ENCODE measurements at regions of chr3 and their contacts with region 1.

Region 1: DNA sequence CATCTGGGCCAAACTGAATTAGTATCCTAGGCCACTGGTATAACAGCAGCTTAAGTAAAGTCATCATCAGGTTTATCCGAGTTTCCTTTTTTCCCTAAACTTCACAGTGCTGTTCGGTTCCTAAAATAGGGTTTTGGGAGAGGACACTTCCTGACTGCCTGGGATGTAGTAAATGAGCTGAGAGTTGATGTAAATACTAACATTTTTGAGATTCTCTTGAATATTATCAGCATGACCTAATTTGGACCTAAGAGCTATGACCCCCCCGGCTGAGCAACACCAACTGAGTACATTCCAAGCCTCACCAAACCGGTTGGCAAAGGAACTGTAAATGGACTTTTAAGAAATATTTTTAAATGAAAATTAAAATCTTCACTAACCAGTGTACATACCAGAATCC is 78.8 kb downstream of the IL5RA start:
- DNase-seq: peak; percentile 38
- ATAC-seq: peak; percentile 87
- H3K4me3 ChIP-seq: no peak overlapping the region
- H3K27ac ChIP-seq: peak overlapping the region; percentile 79; the same call in 1 of the 2 replicates
- H3K4me1 ChIP-seq: peaks cover 4% of the 10 kb centered on the region; the same call in 1 of the 2 replicates
- H3K27me3 ChIP-seq: no peaks in the 10 kb centered on the region
- CTCF ChIP-seq: no peak
- POLR2A ChIP-seq: no peak
- RAD21 ChIP-seq: no peak

Region 2: DNA sequence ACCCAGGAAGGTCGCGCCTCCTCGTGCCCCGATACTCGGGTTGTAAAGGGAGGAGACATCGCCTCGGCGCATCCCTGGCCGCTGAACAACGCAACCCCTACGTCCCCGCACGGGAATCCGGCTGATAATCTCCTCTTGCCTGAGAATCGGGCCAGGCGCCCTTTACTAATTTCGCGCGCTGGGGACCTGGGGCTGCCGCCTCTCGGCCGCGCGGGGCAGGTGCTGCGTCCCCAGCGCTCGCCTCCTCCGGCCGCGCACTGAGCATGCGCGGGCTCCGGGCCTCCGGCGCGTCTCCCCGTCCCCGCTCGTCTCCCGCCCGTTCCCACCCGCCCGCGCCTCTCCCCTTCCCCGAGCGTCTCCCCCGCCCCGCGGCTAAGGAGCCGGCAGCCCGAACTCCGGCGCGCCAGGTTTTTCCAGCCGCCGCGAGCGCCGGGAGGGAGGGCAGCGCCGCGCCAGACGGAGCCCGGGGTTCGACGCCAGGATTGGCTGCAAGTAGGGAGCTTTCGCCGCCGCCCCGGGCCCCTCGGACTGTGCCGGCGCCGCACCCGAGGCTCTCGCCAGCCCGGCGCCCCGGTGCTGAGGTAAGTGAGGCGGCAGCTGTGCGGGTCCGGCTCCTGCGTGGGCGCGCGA is 932.8 kb before region 1 on chr3 and contains the start of gene CNTN4:
- CTCF ChIA-PET with region 1: no interaction called
- POLR2A ChIA-PET with region 1: no interaction called
- dilution Hi-C with region 1: no loop called
- in situ Hi-C with region 1: no loop called
- intact Hi-C with region 1: no loop called
- DNase-seq: no peak
- ATAC-seq: no peak
- H3K4me3 ChIP-seq: no peak within 1 kb of the TSS
- H3K27ac ChIP-seq: no peak within 1 kb of the TSS
- H3K4me1 ChIP-seq: no peaks in the 10 kb centered on the region
- H3K27me3 ChIP-seq: no peaks in the 10 kb centered on the region; the same call in 1 of the 2 replicates
- CTCF ChIP-seq: no peak
- POLR2A ChIP-seq: no peak
- RAD21 ChIP-seq: no peak
- total RNA-seq, gene CNTN4: under 0.01 TPM in 2 replicates

Region 3: DNA sequence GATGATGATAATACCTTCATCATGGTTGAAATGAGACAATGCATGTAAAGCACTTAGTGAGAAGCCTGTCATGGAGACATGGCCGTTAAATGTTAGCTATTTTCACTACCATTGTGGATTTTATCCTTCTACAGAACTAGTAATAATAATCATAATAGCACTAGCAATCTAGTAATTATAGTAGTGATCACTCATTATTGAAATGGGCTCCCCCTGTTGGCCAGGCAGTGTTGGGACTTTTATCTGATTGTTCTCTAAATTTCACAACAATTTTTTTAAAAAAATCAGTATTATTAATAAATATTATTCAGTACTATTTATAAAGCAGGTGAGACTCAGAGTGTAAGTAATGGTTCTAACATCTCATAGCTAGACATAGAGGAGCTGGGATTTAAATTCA is 317.4 kb before region 1 on chr3:
- CTCF ChIA-PET with region 1: no interaction called
- POLR2A ChIA-PET with region 1: no interaction called
- dilution Hi-C with region 1: no loop called
- in situ Hi-C with region 1: no loop called
- intact Hi-C with region 1: no loop called
- DNase-seq: no peak
- ATAC-seq: no peak
- H3K4me3 ChIP-seq: no peak overlapping the region
- H3K27ac ChIP-seq: no peak overlapping the region
- H3K4me1 ChIP-seq: no peaks in the 10 kb centered on the region
- H3K27me3 ChIP-seq: no peaks in the 10 kb centered on the region
- CTCF ChIP-seq: peak; percentile 38
- POLR2A ChIP-seq: no peak
- RAD21 ChIP-seq: peak; percentile 20; the same call in 1 of the 2 replicates

Region 4: DNA sequence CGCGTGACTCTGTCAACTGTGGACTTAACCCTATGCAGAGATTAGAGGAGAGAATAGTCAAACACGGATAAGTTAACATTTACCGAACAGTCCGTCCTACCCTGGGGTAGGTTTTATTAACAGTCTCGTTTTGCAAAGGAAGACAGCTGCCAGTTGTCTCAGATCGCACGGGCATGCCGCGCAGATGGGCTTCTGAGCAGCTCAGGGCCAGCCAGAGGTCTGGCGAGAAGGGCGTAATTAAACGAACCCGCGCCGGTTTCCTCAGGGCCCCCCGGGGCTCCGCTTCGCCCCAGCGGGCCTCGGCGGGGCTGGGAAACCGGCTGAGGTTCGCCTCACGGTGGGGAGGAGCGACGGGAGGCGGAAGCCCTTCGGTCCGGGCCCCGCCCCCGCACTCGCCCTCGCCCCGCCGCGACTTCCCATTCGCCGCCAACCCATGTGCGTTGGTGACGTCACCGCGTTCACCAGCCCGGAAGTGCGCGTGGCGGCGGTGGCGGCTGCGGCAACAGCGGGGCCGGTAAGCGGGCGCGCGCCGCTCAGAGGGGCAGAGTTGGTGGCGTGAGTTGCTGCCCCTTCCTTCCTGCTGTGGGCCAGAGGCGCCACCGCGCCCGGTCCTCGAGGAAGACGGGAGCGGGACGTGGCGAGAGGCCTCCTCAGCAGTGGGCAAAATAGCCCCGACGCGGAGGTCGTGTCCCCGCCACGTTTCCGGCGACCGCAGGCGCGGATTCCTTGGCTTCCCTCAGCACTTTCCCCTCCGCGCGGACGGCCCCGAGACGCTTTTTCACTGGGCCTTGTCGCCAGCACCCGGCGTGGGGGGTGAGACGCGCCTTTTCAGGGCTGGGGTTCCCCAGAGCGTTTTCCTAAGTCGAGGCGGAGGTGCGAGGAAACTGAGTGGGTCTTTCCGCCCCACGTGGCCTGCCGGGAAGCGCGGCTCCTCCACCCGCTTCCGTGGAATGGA is 95.4 kb after region 1 on chr3 and contains the start of gene TRNT1:
- CTCF ChIA-PET with region 1: no interaction called
- POLR2A ChIA-PET with region 1: no interaction called
- dilution Hi-C with region 1: no loop called
- in situ Hi-C with region 1: no loop called
- intact Hi-C with region 1: loop called (anchors 1 kb)
- DNase-seq: peak; percentile 91
- ATAC-seq: peak; percentile 97
- H3K4me3 ChIP-seq: peak within 1 kb of the TSS; percentile 99
- H3K27ac ChIP-seq: peak within 1 kb of the TSS; percentile 99
- H3K4me1 ChIP-seq: peaks cover 5% of the 10 kb centered on the region
- H3K27me3 ChIP-seq: no peaks in the 10 kb centered on the region
- CTCF ChIP-seq: no peak
- POLR2A ChIP-seq: peak; percentile 97
- RAD21 ChIP-seq: no peak
- total RNA-seq, gene TRNT1: 11.8 and 25.0 TPM in 2 replicates